ENCODE measurements at regions of chr15 and their contacts with region 1.

Region 1: GRCh38 chr15:38576837-38577236 is 12.2 kb upstream of the RASGRP1 start:
- DNase-seq: no peak
- H3K4me3 ChIP-seq: no peak overlapping the region
- H3K27ac ChIP-seq: no peak overlapping the region
- H3K4me1 ChIP-seq: no peaks in the 10 kb centered on the region
- H3K27me3 ChIP-seq: no peaks in the 10 kb centered on the region
- CTCF ChIP-seq: no peak
- EP300 ChIP-seq: no peak
- POLR2A ChIP-seq: no peak

Region 2: GRCh38 chr15:38555686-38556334 is 21.0 kb before region 1 on chr15:
- in situ Hi-C with region 1: no loop called
- intact Hi-C with region 1: loop called (anchors 1 kb)
- DNase-seq: no peak
- H3K4me3 ChIP-seq: no peak overlapping the region
- H3K27ac ChIP-seq: no peak overlapping the region
- H3K4me1 ChIP-seq: peaks cover 0 to 3% (median 0%) of the 10 kb centered on the region in 4 donors
- H3K27me3 ChIP-seq: no peaks in the 10 kb centered on the region
- CTCF ChIP-seq: no peak
- EP300 ChIP-seq: no peak
- POLR2A ChIP-seq: no peak

Measured in transverse colon (tissue), 4 donors.